Activated CD4-positive, alpha-beta T cell treated with anti-CD3 and anti-CD28 coated beads for 36 hours (primary cell): ENCODE measurements at regions of chr17 and their contacts with region 1.

Region 1: DNA sequence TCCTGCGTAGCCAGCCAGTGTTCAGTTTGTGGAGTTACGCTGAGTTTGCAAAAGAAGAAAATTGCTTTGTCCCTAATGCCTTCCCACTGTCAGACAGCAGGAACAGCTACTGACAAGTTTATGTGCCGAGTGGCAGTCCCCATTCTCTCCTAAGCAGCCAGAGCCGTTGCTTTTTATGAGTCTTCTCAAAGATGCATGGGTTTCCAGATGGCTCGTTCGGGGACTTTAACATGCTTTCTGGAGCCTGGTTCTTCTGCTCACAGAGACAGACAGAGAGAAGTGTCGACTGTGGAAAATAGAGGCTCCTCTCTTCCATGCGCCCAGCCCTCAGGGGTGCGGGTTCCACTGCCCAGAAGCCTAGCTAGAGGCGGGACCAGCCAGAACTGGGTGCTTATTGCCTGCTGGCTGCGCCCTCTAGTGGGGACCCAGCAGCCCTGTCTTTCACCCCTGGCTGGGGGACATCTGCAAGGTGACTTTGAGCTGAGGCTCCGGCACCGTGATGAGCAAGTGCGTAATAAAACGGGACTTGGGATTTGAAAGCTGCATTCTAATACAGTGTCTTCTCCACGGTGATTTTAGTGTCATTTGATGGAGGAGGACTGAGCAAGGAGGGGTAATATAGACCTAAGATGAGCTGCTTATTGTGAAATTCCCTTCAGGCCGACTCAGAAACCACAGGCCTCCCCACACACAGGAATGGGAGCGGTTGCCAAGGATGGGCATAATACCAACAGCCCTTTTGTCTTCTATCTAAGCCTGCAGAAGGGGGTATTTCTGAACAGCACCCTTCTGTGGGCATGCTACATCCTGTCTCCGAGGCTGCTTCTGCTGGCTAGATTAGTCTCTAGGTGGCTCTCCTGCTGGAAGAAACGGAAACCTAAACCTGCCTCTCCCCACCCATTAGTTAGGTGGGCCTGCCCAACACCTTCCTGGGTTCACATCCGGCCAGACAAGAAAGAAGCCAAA is 73.1 kb downstream of the CCDC182 start:
- DNase-seq: peak; percentile 85
- ATAC-seq: peak; percentile 83
- H3K4me3 Mint-ChIP-seq: no peak overlapping the region
- H3K27ac Mint-ChIP-seq: peak overlapping the region; percentile 4
- H3K4me1 Mint-ChIP-seq: peaks cover 17% of the 10 kb centered on the region
- H3K27me3 Mint-ChIP-seq: no peaks in the 10 kb centered on the region

Region 2: DNA sequence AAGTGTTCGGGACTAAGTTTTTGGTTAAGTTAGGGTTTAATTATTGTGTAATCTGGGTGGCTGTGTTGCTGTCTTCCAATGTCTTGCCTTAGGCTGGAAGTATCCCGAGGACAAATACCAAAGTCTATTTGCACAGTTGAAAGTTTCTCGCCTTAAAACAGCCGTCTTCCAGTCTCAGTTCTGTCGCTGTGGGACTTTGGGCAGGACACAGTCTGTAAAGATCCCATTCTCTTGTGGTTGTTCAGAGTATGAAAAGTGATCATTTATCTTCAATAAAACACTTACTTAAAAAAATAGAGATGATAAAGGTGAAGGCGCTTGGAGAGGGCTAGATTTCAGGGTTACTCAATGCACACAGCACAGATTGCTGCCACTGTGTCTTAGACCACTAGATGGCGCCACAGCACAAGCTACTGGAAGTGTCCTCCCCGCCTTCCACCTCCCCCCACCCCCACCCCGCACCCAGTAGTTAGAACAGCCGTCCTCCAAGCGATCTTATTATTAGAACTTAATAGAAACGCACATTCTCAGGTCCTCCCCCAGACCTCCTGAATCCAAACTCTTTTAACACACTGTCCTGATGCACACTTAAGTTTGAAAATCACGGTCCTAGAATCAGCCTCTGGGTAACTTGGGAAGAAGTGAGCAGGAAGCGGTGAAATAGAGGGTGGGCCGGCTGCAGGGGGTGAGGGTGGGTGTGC is 541.0 kb before region 1 on chr17:
- CTCF ChIA-PET with region 1: interaction called, 7 read pairs
- POLR2A ChIA-PET with region 1: no interaction called
- intact Hi-C with region 1: loop called (anchors 1 to 10 kb)
- DNase-seq: peak; percentile 91
- ATAC-seq: peak; percentile 84
- H3K4me3 Mint-ChIP-seq: no peak overlapping the region
- H3K27ac Mint-ChIP-seq: no peak overlapping the region
- H3K4me1 Mint-ChIP-seq: peaks cover 5% of the 10 kb centered on the region
- H3K27me3 Mint-ChIP-seq: no peaks in the 10 kb centered on the region

Region 3: GRCh38 chr17:57552114-57552624 is 119.8 kb before region 1 on chr17:
- CTCF ChIA-PET with region 1: interaction called, 7 read pairs
- POLR2A ChIA-PET with region 1: no interaction called
- intact Hi-C with region 1: loop called in 1 of 2 experiments (anchors 5 kb)
- DNase-seq: peak; percentile 61
- ATAC-seq: peak; percentile 74
- H3K4me3 Mint-ChIP-seq: no peak overlapping the region
- H3K27ac Mint-ChIP-seq: peak overlapping the region; percentile 29
- H3K4me1 Mint-ChIP-seq: peaks cover 28% of the 10 kb centered on the region
- H3K27me3 Mint-ChIP-seq: no peaks in the 10 kb centered on the region

Region 4: GRCh38 chr17:57597531-57598453 is 74.2 kb before region 1 on chr17:
- CTCF ChIA-PET with region 1: interaction called, 23 read pairs
- POLR2A ChIA-PET with region 1: no interaction called
- intact Hi-C with region 1: loop called (anchors 1 to 2 kb)
- DNase-seq: peak; percentile 53
- ATAC-seq: no peak
- H3K4me3 Mint-ChIP-seq: no peak overlapping the region
- H3K27ac Mint-ChIP-seq: peak overlapping the region; percentile 81
- H3K4me1 Mint-ChIP-seq: peaks cover 50% of the 10 kb centered on the region
- H3K27me3 Mint-ChIP-seq: no peaks in the 10 kb centered on the region

Region 5: GRCh38 chr17:57604771-57605674 is 66.9 kb before region 1 on chr17:
- CTCF ChIA-PET with region 1: interaction called, 23 read pairs
- POLR2A ChIA-PET with region 1: no interaction called
- intact Hi-C with region 1: loop called in 1 of 2 experiments (anchors 2 kb)
- DNase-seq: peak; percentile 56
- ATAC-seq: peak; percentile 21
- H3K4me3 Mint-ChIP-seq: peak overlapping the region; percentile 22
- H3K27ac Mint-ChIP-seq: peak overlapping the region; percentile 97
- H3K4me1 Mint-ChIP-seq: peaks cover 75% of the 10 kb centered on the region
- H3K27me3 Mint-ChIP-seq: no peaks in the 10 kb centered on the region

Region 6: DNA sequence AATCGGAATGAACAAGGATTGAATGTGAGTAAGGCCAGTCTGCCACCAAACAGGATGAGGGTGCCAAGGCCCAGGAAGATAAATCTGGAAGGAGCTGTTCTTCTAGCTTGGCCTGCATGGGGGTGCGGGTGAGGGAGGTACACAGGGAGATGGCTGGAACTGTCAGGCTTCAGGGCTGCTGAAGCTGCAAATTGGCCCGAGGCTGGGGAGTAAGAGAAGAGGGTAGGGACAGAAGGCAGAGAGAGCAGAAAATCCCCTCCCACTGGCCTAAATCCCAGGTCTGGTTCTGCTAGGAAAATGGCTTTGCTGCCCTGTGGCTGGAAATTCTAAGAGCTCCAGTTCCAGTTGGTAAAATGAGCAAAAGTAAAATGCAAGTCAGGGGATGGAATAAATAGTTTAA is 14.7 kb before region 1 on chr17:
- CTCF ChIA-PET with region 1: interaction called, 29 read pairs
- POLR2A ChIA-PET with region 1: no interaction called
- intact Hi-C with region 1: no loop called
- DNase-seq: no peak
- ATAC-seq: no peak
- H3K4me3 Mint-ChIP-seq: no peak overlapping the region
- H3K27ac Mint-ChIP-seq: no peak overlapping the region
- H3K4me1 Mint-ChIP-seq: no peaks in the 10 kb centered on the region
- H3K27me3 Mint-ChIP-seq: no peaks in the 10 kb centered on the region